ENCODE measurements at regions of chrX and their contacts with region 1.

Region 1: DNA sequence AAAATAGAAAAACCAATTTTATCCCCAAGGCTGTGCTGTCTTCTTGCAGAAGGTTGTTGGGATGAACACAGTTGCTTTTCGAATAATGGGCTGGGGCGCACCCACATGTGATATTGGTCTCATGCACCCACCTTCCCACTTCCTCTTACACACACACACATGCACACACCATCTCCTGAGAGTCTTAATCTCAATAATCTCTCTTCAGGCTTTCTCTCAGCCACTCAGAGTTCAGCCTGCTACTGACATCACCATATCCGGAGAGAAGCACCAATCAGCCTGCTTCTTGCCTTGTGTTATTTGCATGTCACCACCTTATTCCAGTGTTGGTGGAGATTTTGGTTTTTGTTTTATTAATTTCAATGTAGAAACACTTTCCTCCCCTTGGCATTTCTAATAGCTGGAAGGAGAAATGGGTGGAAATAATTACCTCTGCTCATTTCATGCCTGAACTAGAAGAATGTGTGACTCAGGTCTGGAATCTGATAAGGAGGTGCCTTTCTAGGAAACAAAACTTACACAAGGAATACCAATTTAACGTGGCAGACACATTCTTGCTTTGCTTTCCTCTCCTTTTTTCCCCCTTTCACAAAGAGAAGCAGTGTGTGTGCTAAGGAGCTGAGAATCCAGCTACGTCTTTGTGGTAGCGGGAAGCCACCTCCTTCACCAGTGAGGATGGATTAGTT is 400.2 kb downstream of the MID1IP1 start:
- DNase-seq: peak; percentile 32
- H3K4me3 Mint-ChIP-seq: peak overlapping the region; percentile 69
- H3K27ac Mint-ChIP-seq: peak overlapping the region; percentile 97
- H3K4me1 Mint-ChIP-seq: peaks cover 89% of the 10 kb centered on the region
- H3K27me3 Mint-ChIP-seq: no peaks in the 10 kb centered on the region

Region 2: GRCh38 chrX:39144956-39145355 is 56.5 kb before region 1 on chrX:
- intact Hi-C with region 1: no loop called
- DNase-seq: no peak
- H3K4me3 Mint-ChIP-seq: no peak overlapping the region
- H3K27ac Mint-ChIP-seq: no peak overlapping the region
- H3K4me1 Mint-ChIP-seq: peaks cover 2% of the 10 kb centered on the region
- H3K27me3 Mint-ChIP-seq: no peaks in the 10 kb centered on the region

Region 3: DNA sequence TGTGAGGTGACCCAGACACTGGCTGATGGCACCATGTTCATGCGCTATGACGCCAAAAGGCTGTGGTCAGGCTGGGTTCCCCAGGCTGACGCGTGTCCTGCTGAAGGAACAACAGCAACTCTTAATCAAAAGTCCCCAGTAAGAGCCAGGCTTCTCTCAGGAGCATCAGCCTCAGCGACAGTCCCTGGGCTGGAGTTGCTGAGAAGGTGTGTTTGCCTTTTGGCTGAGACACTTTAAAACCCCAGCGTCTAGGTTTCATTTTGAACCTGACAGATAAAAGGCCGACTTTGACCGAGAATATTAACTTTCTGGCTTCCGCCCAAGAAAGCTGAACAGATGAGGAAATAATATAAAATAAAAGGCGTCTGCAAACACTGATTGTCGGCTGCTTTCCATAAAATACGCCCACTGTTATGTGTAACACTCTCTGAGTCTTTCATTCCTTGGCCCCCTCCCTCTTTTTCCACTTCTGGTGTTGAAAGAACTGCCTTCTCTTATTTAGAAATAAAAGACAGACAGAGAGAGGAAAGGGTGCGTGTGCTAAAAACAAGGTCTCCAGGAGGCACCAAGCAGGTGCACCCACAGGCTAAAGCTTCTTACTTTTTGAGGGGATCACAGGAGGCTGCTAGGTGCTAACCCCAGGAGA is 26.6 kb before region 1 on chrX:
- intact Hi-C with region 1: loop called (anchors 2 kb)
- DNase-seq: no peak
- H3K4me3 Mint-ChIP-seq: peak overlapping the region; percentile 44
- H3K27ac Mint-ChIP-seq: peak overlapping the region; percentile 90
- H3K4me1 Mint-ChIP-seq: peaks cover 46% of the 10 kb centered on the region
- H3K27me3 Mint-ChIP-seq: no peaks in the 10 kb centered on the region

Region 4: GRCh38 chrX:39242187-39242586 is 40.7 kb after region 1 on chrX:
- intact Hi-C with region 1: no loop called
- DNase-seq: no peak
- H3K4me3 Mint-ChIP-seq: no peak overlapping the region
- H3K27ac Mint-ChIP-seq: no peak overlapping the region
- H3K4me1 Mint-ChIP-seq: peaks cover 24% of the 10 kb centered on the region
- H3K27me3 Mint-ChIP-seq: no peaks in the 10 kb centered on the region

Region 5: GRCh38 chrX:39253551-39253950 is 52.1 kb after region 1 on chrX:
- intact Hi-C with region 1: loop called (anchors 2 kb)
- DNase-seq: no peak
- H3K4me3 Mint-ChIP-seq: no peak overlapping the region
- H3K27ac Mint-ChIP-seq: peak overlapping the region; percentile 6
- H3K4me1 Mint-ChIP-seq: peaks cover 39% of the 10 kb centered on the region
- H3K27me3 Mint-ChIP-seq: no peaks in the 10 kb centered on the region

Region 6: DNA sequence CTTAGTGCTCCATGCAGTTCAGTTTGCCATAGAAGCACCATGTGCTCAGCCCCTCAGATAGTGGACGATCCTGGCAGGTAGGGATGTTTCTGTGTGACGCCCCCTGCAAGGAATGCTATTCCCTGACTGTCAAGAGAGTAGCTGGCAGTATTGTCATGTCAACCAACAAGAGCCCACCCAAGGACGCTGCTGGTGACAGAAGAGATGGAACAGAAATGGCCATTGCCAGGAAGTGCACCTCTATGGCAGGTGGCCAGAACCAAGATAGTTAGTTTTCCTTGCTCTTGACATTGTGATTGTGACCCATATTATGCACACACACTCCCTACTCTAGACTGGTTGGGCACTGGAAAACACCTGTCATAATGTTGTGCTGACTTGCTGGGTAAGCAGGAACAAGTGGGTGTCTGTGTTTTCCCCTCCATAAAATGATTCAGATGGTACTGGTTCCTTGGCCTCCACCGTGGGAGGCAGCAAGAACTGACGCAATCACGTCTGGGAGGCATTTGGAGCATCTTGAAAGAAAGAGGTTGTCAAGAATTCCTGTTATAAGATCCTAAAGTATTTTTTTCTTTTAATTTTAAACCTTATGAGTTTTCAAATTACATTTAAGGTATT is 107.7 kb after region 1 on chrX:
- intact Hi-C with region 1: loop called (anchors 1 kb)
- DNase-seq: no peak
- H3K4me3 Mint-ChIP-seq: no peak overlapping the region
- H3K27ac Mint-ChIP-seq: peak overlapping the region; percentile 96
- H3K4me1 Mint-ChIP-seq: peaks cover 65% of the 10 kb centered on the region
- H3K27me3 Mint-ChIP-seq: no peaks in the 10 kb centered on the region

Region 7: DNA sequence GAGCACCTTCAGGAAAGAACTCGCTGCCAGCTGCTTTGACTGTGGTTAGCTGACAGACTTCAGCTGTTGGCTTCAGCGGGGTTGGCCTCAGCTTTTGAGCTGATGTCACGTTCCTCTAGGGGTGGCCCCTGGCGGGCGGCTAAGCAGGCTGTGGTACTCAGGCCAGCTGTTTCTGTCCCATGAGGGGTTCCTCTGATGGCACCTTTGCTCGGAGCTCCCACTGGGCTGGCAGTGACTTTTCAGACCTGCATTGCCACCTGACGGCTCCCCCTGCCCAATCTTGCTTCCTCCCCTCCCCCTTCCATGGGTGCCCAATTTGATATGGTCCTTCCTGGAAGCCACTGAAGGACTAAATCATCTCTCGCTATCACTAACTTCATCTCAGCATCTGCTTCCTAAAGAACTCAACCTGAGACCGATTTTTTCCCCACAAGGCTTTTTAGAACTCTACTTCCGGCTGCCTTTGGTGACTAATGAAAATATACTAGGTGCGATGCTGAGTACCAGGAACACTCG is 377.0 kb after region 1 on chrX:
- intact Hi-C with region 1: loop called (anchors 2 kb)
- DNase-seq: peak; percentile 31
- H3K4me3 Mint-ChIP-seq: peak overlapping the region; percentile 52
- H3K27ac Mint-ChIP-seq: peak overlapping the region; percentile 76
- H3K4me1 Mint-ChIP-seq: peaks cover 34% of the 10 kb centered on the region
- H3K27me3 Mint-ChIP-seq: no peaks in the 10 kb centered on the region